HAP-1 (cell line): ENCODE measurements at regions of chr3 and their contacts with region 1.

Region 1: GRCh38 chr3:155352900-155353490 is 59.5 kb upstream of the STRIT1 start:
- DNase-seq: peak in 1 of 2 experiments; percentile 81
- H3K4me3 ChIP-seq: no peak overlapping the region
- H3K4me1 ChIP-seq: peaks cover 14% of the 10 kb centered on the region
- H3K27me3 ChIP-seq: no peaks in the 10 kb centered on the region

Region 2: DNA sequence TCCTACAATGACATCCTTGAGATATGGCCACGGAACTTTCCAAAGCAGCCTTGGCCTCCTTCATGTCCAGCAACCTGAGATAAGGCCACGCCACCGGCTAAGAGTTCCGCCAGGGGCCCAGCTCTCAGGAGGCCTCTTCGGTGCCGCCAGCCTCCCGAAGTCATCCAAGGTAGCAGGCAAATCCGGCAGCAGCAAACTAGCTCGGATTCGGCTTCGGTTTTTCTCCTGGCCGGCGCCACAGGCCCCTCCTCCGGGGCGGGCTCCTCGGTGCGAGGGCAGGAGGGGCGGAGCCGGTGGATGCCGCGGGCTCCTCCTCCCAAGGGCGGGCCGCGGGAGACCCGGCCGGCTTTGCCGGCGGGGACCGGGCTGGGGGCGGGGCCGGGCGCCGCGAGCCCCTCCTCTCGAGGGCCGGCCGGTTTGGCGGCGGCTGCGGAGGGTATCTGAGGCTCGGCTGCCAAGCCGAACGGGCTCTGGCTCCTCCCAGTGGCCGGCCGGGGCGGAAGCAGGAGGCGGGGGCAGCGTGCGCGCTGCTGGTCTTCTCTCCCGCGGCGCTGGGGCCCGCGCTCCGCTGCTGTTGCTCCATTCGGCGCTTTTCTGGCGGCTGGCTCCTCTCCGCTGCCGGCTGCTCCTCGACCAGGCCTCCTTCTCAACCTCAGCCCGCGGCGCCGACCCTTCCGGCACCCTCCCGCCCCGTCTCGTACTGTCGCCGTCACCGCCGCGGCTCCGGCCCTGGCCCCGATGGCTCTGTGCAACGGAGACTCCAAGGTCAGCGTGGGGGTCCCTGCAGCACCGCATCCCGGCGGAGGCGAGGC is 517.3 kb after region 1 on chr3 and contains the start of gene GMPS:
- in situ Hi-C with region 1: loop called (anchors 25 kb)
- DNase-seq: peak; percentile 94 to 96
- H3K4me3 ChIP-seq: peak within 1 kb of the TSS; percentile 97
- H3K4me1 ChIP-seq: peaks cover 18% of the 10 kb centered on the region
- H3K27me3 ChIP-seq: no peaks in the 10 kb centered on the region